A549 (cell line): ENCODE measurements at regions of chr17 and their contacts with region 1.

Region 1: DNA sequence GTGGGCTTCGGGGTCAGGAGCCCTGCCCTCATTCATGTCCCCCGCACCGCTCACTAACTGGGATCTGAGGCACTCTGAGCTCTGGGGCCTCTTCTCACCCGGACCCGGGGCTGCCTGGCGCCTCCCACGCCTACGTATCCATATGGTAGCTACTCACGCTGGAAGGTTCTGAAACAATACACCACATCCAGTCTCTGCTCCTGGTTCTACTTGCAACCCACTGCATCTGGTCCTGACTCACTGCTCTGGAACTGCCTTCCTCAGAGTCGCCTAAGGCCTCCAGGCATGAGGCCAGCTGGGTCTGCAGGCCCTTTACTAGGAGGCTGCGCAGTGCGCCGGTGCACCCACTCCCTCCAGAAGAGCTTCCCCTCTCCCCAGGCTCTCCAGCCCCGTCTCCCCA is 18.1 kb downstream of the USP36 start:
- DNase-seq: no peak
- ATAC-seq: peak in 1 of 2 experiments; percentile 9; a peak in 2 of 6 replicates
- H3K4me3 ChIP-seq: no peak overlapping the region
- H3K27ac ChIP-seq: no peak overlapping the region
- H3K4me1 ChIP-seq: no peaks in the 10 kb centered on the region
- CTCF ChIP-seq: no peak
- EP300 ChIP-seq: no peak
- POLR2A ChIP-seq: no peak
- RAD21 ChIP-seq: no peak

Region 2: GRCh38 chr17:78806451-78806850 is 16.1 kb before region 1 on chr17:
- CTCF ChIA-PET with region 1: interaction called, 14 read pairs
- POLR2A ChIA-PET with region 1: no interaction called
- DNase-seq: peak; percentile 27 to 53
- ATAC-seq: peak; percentile 53 to 63
- H3K4me3 ChIP-seq: no peak overlapping the region
- H3K27ac ChIP-seq: no peak overlapping the region
- H3K4me1 ChIP-seq: no peaks in the 10 kb centered on the region
- CTCF ChIP-seq: no peak
- EP300 ChIP-seq: no peak
- POLR2A ChIP-seq: no peak
- RAD21 ChIP-seq: no peak